ENCODE measurements at regions of chr18 and their contacts with region 1.

Region 1: DNA sequence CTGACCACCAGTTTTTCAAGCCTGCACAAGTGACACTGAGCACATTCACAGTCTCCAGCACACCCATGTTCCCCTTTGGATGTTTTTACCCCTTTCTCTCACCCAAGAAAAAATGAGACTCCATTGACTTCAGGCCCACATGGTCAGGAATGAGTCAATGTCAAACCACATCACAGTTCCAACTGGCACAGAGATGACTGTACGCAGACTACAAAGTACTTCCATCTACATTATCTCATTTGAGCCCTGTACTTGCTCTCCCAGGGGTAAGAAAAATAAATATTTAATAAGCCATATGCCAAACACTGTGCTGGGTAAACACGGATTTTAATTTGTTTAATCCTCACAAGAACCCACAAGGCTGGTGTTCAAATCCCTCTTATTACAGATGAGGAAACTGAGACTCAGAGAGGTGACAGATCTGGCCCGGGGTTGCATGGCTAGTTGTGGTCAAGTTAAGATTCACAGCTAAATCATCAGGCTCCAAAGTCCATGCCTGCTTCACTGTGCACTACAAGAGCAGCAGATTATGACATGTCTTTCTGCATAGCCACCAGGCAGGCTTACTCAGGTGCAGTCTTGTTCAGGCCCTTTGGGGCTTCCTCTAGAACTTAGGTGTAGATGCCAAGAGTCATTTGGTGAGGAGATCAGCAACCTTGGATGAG is 106.1 kb downstream of the TXNL1 start:
- DNase-seq: peak; percentile 62
- ATAC-seq: peak; percentile 97
- H3K4me3 Mint-ChIP-seq: no peak overlapping the region
- H3K27ac Mint-ChIP-seq: no peak overlapping the region
- H3K4me1 Mint-ChIP-seq: peaks cover 6% of the 10 kb centered on the region
- H3K27me3 Mint-ChIP-seq: peaks cover 13% of the 10 kb centered on the region

Region 2: GRCh38 chr18:56112013-56112749 is 420.1 kb before region 1 on chr18:
- CTCF ChIA-PET with region 1: no interaction called
- POLR2A ChIA-PET with region 1: no interaction called
- intact Hi-C with region 1: loop called in 1 of 2 experiments (anchors 5 kb)
- DNase-seq: peak; percentile 55
- ATAC-seq: peak; percentile 98
- H3K4me3 Mint-ChIP-seq: peak overlapping the region; percentile 4
- H3K27ac Mint-ChIP-seq: peak overlapping the region; percentile 41
- H3K4me1 Mint-ChIP-seq: peaks cover 6% of the 10 kb centered on the region
- H3K27me3 Mint-ChIP-seq: peaks cover 18% of the 10 kb centered on the region

Region 3: GRCh38 chr18:56505971-56506370 is 26.3 kb before region 1 on chr18:
- CTCF ChIA-PET with region 1: no interaction called
- POLR2A ChIA-PET with region 1: no interaction called
- intact Hi-C with region 1: loop called in 1 of 2 experiments (anchors 1 kb)
- DNase-seq: no peak
- ATAC-seq: no peak
- H3K4me3 Mint-ChIP-seq: no peak overlapping the region
- H3K27ac Mint-ChIP-seq: no peak overlapping the region
- H3K4me1 Mint-ChIP-seq: peaks cover 16% of the 10 kb centered on the region
- H3K27me3 Mint-ChIP-seq: peaks cover 11% of the 10 kb centered on the region

Region 4: GRCh38 chr18:56615738-56616520 is 83.6 kb after region 1 on chr18:
- CTCF ChIA-PET with region 1: no interaction called
- POLR2A ChIA-PET with region 1: no interaction called
- intact Hi-C with region 1: no loop called
- DNase-seq: no peak
- ATAC-seq: no peak
- H3K4me3 Mint-ChIP-seq: no peak overlapping the region
- H3K27ac Mint-ChIP-seq: no peak overlapping the region
- H3K4me1 Mint-ChIP-seq: no peaks in the 10 kb centered on the region
- H3K27me3 Mint-ChIP-seq: no peaks in the 10 kb centered on the region